PC-9 (cell line): ENCODE measurements at regions of chr7 and their contacts with region 1.

Region 1: GRCh38 chr7:92633211-92633906 is 43.2 kb upstream of the FAM133B start:
- DNase-seq: peak; percentile 43 to 90
- H3K4me3 ChIP-seq: no peak overlapping the region; the same call in 1 of the 2 replicates
- H3K27ac ChIP-seq: peak overlapping the region; percentile 60
- H3K4me1 ChIP-seq: peaks cover 41% of the 10 kb centered on the region
- H3K27me3 ChIP-seq: no peaks in the 10 kb centered on the region
- CTCF ChIP-seq: no peak

Region 2: DNA sequence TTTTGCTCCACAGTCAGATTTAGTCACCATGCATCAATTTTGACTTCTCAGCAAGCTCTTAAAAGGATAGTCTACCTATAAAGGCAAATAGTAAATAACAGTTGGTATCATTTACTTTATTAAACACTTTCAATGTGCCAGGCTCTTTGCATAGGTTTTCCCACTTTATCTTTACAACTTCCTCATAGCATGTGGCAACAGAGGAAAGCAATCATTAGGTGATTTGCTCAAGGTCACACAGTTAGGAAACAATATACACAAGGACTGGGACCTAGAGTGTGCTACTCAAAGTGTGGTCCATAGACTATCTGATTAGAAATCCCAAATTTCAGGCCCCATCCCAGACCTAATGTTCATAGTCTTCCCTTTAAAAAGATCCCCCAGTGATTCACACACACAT is 965.1 kb before region 1 on chr7:
- CTCF ChIA-PET with region 1: no interaction called
- POLR2A ChIA-PET with region 1: no interaction called
- intact Hi-C with region 1: no loop called
- DNase-seq: no peak
- H3K4me3 ChIP-seq: no peak overlapping the region
- H3K27ac ChIP-seq: no peak overlapping the region
- H3K4me1 ChIP-seq: no peaks in the 10 kb centered on the region
- H3K27me3 ChIP-seq: no peaks in the 10 kb centered on the region
- CTCF ChIP-seq: no peak

Region 3: GRCh38 chr7:92609921-92610518 is 23.3 kb before region 1 on chr7:
- CTCF ChIA-PET with region 1: no interaction called
- POLR2A ChIA-PET with region 1: no interaction called
- intact Hi-C with region 1: no loop called
- DNase-seq: no peak
- H3K4me3 ChIP-seq: no peak overlapping the region
- H3K27ac ChIP-seq: no peak overlapping the region
- H3K4me1 ChIP-seq: no peaks in the 10 kb centered on the region
- H3K27me3 ChIP-seq: no peaks in the 10 kb centered on the region
- CTCF ChIP-seq: peak; percentile 51; the same call in 1 of the 2 replicates

Region 4: GRCh38 chr7:93366816-93367215 is 733.5 kb after region 1 on chr7:
- CTCF ChIA-PET with region 1: no interaction called
- POLR2A ChIA-PET with region 1: interaction called, 13 read pairs
- intact Hi-C with region 1: no loop called
- DNase-seq: no peak
- H3K4me3 ChIP-seq: no peak overlapping the region
- H3K27ac ChIP-seq: no peak overlapping the region
- H3K4me1 ChIP-seq: no peaks in the 10 kb centered on the region
- H3K27me3 ChIP-seq: no peaks in the 10 kb centered on the region
- CTCF ChIP-seq: no peak